ENCODE measurements at regions of chr10 and their contacts with region 1.

Region 1: GRCh38 chr10:100046021-100046486 is 35.6 kb downstream of the CPN1 start:
- DNase-seq: peak; percentile 10 to 85 (median 72)
- ATAC-seq: peak in 3 of 4 experiments; percentile 54 to 74 (median 69)
- H3K4me3 ChIP-seq: no peak overlapping the region
- H3K4me3 Mint-ChIP-seq: no peak overlapping the region
- H3K27ac ChIP-seq: no peak overlapping the region
- H3K27ac Mint-ChIP-seq: no peak overlapping the region
- H3K4me1 ChIP-seq: no peaks in the 10 kb centered on the region
- H3K4me1 Mint-ChIP-seq: no peaks in the 10 kb centered on the region
- H3K27me3 ChIP-seq: peaks cover 0 to 6% of the 10 kb centered on the region in 2 experiments
- H3K27me3 Mint-ChIP-seq: peaks cover 0 to 14% of the 10 kb centered on the region in 2 donors

Region 2: DNA sequence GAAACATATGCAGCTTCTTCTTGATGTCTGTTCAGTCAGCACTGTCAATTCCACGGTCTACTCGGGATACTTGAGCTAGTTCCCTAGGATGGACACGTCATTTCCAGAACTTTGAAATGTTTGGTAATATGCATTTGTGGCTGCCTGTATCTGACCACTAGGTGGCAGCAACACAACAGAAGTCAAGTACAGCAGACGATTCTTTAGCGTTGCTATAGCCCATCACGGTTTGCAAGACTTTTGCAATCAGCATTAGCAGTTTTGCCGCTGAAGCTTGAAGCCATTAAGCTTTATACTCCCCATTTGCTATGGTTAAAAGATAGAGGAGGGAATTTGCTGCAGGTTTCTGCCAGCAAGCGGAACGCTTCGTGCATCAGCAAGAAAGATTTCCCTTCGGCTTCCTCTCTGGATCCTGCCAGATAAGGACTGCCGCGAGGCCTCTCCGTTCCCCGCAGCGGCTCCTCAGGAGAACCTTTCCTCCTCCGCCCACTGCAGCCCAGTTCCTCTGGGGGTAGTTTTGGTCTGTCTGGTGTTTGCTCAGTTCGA is 200.1 kb before region 1 on chr10:
- CTCF ChIA-PET with region 1: interaction called, 40 to 42 read pairs
- POLR2A ChIA-PET with region 1: interaction called in 1 of 2 experiments, 5 read pairs
- DNase-seq: peak; percentile 25 to 89 (median 57)
- ATAC-seq: peak; percentile 77 to 89 (median 87)
- H3K4me3 ChIP-seq: no peak overlapping the region
- H3K4me3 Mint-ChIP-seq: peak overlapping the region in 2 of 3 donors; percentile 25 to 31
- H3K27ac ChIP-seq: no peak overlapping the region
- H3K27ac Mint-ChIP-seq: no peak overlapping the region
- H3K4me1 ChIP-seq: peaks cover 0 to 9% of the 10 kb centered on the region in 2 experiments
- H3K4me1 Mint-ChIP-seq: peaks cover 0 to 8% (median 6%) of the 10 kb centered on the region in 3 donors
- H3K27me3 ChIP-seq: peaks cover 0 to 11% of the 10 kb centered on the region in 2 experiments
- H3K27me3 Mint-ChIP-seq: peaks cover 0 to 1% of the 10 kb centered on the region in 2 donors

Region 3: DNA sequence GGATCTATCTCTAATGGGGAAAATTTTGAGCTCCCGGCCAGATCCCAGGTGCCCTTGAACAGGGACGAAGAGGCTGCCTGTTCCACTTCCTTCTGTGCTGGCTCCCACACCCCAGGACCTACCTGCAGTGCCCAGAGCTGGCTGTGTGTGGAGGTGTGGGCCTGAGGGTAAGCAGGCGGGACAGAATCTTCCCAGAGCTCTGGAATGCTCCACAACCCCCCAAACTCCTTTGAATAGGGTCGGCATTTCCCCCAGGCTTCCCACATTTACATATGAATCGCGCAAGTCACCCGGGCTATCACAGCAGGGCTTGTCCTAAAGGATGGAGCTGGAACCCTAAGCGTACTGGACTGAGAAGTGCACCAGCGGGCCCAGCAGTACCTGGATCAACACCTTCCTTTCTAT is 132.2 kb before region 1 on chr10:
- CTCF ChIA-PET with region 1: no interaction called
- POLR2A ChIA-PET with region 1: no interaction called
- DNase-seq: no peak
- ATAC-seq: no peak
- H3K4me3 ChIP-seq: no peak overlapping the region
- H3K4me3 Mint-ChIP-seq: no peak overlapping the region
- H3K27ac ChIP-seq: no peak overlapping the region
- H3K27ac Mint-ChIP-seq: no peak overlapping the region
- H3K4me1 ChIP-seq: no peaks in the 10 kb centered on the region
- H3K4me1 Mint-ChIP-seq: no peaks in the 10 kb centered on the region
- H3K27me3 ChIP-seq: no peaks in the 10 kb centered on the region
- H3K27me3 Mint-ChIP-seq: no peaks in the 10 kb centered on the region

Measured in T-cell (primary cell).